Caco-2 (cell line): ENCODE measurements at regions of chr4 and their contacts with region 1.

Region 1: DNA sequence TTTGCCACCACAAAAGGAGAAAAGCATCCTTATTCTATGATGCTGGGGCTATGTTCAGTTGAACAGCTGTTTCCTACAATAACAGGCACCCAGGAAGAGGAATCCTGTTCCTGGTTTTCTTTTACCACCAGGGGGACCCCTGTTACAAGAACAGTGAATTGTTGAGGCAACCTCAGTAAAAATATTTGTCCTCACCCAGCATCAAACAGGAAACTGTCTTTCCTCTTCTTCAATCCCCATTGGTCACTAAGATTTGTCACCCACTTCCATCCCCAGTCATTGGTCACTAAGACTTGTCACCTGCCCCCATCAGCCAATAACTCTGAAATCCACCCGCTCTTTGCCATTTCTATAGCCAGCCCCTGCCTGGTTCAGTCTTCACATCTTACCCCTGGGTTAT is 143.5 kb upstream of the GALNT7 start:
- DNase-seq: peak; percentile 44 to 74
- H3K4me3 ChIP-seq: no peak overlapping the region
- H3K4me3 Mint-ChIP-seq: no peak overlapping the region
- H3K27ac Mint-ChIP-seq: no peak overlapping the region
- H3K4me1 ChIP-seq: no peaks in the 10 kb centered on the region
- H3K4me1 Mint-ChIP-seq: no peaks in the 10 kb centered on the region
- H3K27me3 ChIP-seq: 0 out of 2 replicates have a peak, but pooled peaks cover 1% of the 10 kb centered on the region
- H3K27me3 Mint-ChIP-seq: peaks cover 15% of the 10 kb centered on the region
- CTCF ChIP-seq: peak; percentile 62 to 70

Region 2: DNA sequence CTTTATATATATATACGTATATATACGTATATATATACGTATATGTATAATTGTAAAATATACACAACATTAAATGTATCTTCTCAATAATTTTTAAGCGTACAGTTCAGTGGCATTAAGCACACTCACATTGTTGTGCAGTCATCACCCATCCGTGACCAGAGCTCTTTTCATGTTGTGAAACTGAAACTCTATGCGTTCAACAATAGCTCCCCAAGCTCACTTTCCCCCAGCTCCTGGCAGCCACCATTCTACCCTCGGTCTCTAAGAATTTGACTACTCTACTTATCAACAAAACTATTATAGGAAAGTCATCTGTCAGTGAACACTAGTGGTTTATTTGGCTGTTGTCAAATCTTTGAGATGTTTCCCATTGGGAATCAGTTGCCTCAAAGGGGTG is 478.3 kb before region 1 on chr4:
- CTCF ChIA-PET with region 1: no interaction called
- POLR2A ChIA-PET with region 1: no interaction called
- intact Hi-C with region 1: no loop called
- DNase-seq: no peak
- H3K4me3 ChIP-seq: no peak overlapping the region
- H3K4me3 Mint-ChIP-seq: no peak overlapping the region
- H3K27ac Mint-ChIP-seq: no peak overlapping the region
- H3K4me1 ChIP-seq: no peaks in the 10 kb centered on the region
- H3K4me1 Mint-ChIP-seq: no peaks in the 10 kb centered on the region
- H3K27me3 ChIP-seq: no peaks in the 10 kb centered on the region
- H3K27me3 Mint-ChIP-seq: no peaks in the 10 kb centered on the region
- CTCF ChIP-seq: no peak

Region 3: GRCh38 chr4:173009129-173009823 is 15.9 kb before region 1 on chr4:
- CTCF ChIA-PET with region 1: no interaction called
- POLR2A ChIA-PET with region 1: no interaction called
- intact Hi-C with region 1: no loop called
- DNase-seq: no peak
- H3K4me3 ChIP-seq: no peak overlapping the region
- H3K4me3 Mint-ChIP-seq: no peak overlapping the region
- H3K27ac Mint-ChIP-seq: no peak overlapping the region
- H3K4me1 ChIP-seq: no peaks in the 10 kb centered on the region
- H3K4me1 Mint-ChIP-seq: no peaks in the 10 kb centered on the region
- H3K27me3 ChIP-seq: no peaks in the 10 kb centered on the region
- H3K27me3 Mint-ChIP-seq: no peaks in the 10 kb centered on the region
- CTCF ChIP-seq: no peak

Region 4: GRCh38 chr4:173168396-173169177 is 143.5 kb after region 1 on chr4 and contains the start of gene GALNT7:
- CTCF ChIA-PET with region 1: no interaction called
- POLR2A ChIA-PET with region 1: no interaction called
- intact Hi-C with region 1: loop called (anchors 1 kb)
- DNase-seq: peak; percentile 80 to 83
- H3K4me3 ChIP-seq: peak within 1 kb of the TSS; percentile 58
- H3K4me3 Mint-ChIP-seq: peak within 1 kb of the TSS; percentile 90
- H3K27ac Mint-ChIP-seq: peak within 1 kb of the TSS; percentile 85
- H3K4me1 ChIP-seq: peaks cover 8% of the 10 kb centered on the region; the same call in 1 of the 2 replicates
- H3K4me1 Mint-ChIP-seq: no peaks in the 10 kb centered on the region
- H3K27me3 ChIP-seq: no peaks in the 10 kb centered on the region
- H3K27me3 Mint-ChIP-seq: no peaks in the 10 kb centered on the region
- CTCF ChIP-seq: no peak
- total RNA-seq, gene GALNT7: 16.8 and 17.4 TPM in 2 replicates

Region 5: GRCh38 chr4:173231916-173232315 is 206.8 kb after region 1 on chr4:
- CTCF ChIA-PET with region 1: no interaction called
- POLR2A ChIA-PET with region 1: no interaction called
- intact Hi-C with region 1: loop called (anchors 1 kb)
- DNase-seq: peak in 1 of 2 experiments; percentile 3
- H3K4me3 ChIP-seq: no peak overlapping the region
- H3K4me3 Mint-ChIP-seq: no peak overlapping the region
- H3K27ac Mint-ChIP-seq: no peak overlapping the region
- H3K4me1 ChIP-seq: no peaks in the 10 kb centered on the region
- H3K4me1 Mint-ChIP-seq: peaks cover 8% of the 10 kb centered on the region
- H3K27me3 ChIP-seq: no peaks in the 10 kb centered on the region
- H3K27me3 Mint-ChIP-seq: no peaks in the 10 kb centered on the region
- CTCF ChIP-seq: peak in 1 of 2 experiments; percentile 38

Region 6: GRCh38 chr4:173257732-173258717 is 232.9 kb after region 1 on chr4:
- CTCF ChIA-PET with region 1: interaction called, 5 read pairs
- POLR2A ChIA-PET with region 1: no interaction called
- intact Hi-C with region 1: loop called (anchors 1 kb)
- DNase-seq: peak; percentile 53 to 60
- H3K4me3 ChIP-seq: no peak overlapping the region
- H3K4me3 Mint-ChIP-seq: no peak overlapping the region
- H3K27ac Mint-ChIP-seq: no peak overlapping the region
- H3K4me1 ChIP-seq: no peaks in the 10 kb centered on the region
- H3K4me1 Mint-ChIP-seq: no peaks in the 10 kb centered on the region
- H3K27me3 ChIP-seq: no peaks in the 10 kb centered on the region
- H3K27me3 Mint-ChIP-seq: no peaks in the 10 kb centered on the region
- CTCF ChIP-seq: peak; percentile 68 to 72

Region 7: DNA sequence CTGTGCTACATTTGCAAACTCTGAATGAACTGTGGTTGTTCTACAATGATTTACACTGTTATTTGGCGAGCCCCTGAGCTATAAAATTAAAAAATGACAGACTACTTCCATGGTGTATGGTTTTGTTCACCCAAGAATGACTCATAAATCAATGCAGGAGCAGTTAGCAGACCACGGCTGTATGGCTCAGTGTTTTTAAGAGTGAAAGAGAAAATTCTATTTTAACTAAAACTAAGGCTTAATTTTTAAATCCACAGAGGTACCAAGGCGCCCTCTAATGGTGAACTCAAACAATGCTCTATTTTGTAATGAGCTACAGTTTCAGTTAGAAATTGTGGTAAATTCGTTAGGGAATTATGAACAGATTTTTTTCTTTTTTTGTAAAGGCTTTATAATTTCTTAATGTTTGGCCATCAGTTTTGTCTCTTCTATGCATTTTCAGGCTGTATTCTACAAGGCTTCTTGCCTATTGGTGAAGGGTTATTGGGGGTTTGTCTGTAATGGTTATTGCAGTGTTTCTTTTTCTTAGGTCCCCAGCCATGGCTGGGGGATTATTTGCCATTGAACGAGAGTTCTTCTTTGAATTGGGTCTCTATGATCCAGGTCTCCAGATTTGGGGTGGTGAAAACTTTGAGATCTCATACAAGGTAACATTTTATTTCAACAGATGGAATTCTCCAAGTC is 276.5 kb after region 1 on chr4:
- CTCF ChIA-PET with region 1: interaction called, 4 read pairs
- POLR2A ChIA-PET with region 1: no interaction called
- intact Hi-C with region 1: loop called (anchors 2 kb)
- DNase-seq: no peak
- H3K4me3 ChIP-seq: no peak overlapping the region
- H3K4me3 Mint-ChIP-seq: no peak overlapping the region
- H3K27ac Mint-ChIP-seq: no peak overlapping the region
- H3K4me1 ChIP-seq: no peaks in the 10 kb centered on the region
- H3K4me1 Mint-ChIP-seq: no peaks in the 10 kb centered on the region
- H3K27me3 ChIP-seq: no peaks in the 10 kb centered on the region
- H3K27me3 Mint-ChIP-seq: no peaks in the 10 kb centered on the region
- CTCF ChIP-seq: peak; percentile 35 to 50